ENCODE measurements at regions of chr7 and their contacts with region 1.

Region 1: DNA sequence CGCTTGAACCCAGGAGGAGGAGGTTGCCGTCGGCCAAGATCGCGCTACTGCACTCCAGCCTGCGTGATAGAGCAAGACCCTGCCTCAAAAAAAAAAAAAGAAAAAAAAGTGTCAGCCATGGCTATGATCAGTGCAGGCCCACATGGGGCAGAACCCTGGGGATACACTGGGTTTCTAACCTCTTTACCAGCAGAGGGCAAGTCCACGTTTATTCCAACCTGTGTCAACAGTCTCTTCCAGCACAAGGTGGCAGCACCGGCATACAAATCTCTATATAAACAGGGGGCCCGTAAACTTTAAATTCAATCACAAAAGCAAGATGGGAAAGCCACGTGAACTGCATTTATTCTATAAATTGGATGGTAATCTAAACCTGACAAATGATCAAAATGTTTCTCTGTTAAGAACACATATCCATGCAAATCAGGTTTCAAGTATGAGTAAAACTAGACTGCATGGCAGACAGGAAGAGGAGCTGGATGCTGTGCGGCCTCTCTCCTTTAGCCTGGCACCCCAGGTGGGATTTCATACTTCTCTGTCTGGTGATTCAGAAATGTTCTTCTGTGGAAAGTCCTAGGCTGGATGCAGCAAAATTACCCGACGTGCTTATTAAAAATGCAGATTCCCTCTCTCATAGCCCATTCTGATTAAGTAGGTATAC is 60.0 kb upstream of the STEAP1B start:
- H3K4me3 ChIP-seq: no peak overlapping the region
- H3K27ac ChIP-seq: no peak overlapping the region
- H3K4me1 ChIP-seq: peaks cover 19% of the 10 kb centered on the region
- CTCF ChIP-seq: peak; percentile 92

Region 2: DNA sequence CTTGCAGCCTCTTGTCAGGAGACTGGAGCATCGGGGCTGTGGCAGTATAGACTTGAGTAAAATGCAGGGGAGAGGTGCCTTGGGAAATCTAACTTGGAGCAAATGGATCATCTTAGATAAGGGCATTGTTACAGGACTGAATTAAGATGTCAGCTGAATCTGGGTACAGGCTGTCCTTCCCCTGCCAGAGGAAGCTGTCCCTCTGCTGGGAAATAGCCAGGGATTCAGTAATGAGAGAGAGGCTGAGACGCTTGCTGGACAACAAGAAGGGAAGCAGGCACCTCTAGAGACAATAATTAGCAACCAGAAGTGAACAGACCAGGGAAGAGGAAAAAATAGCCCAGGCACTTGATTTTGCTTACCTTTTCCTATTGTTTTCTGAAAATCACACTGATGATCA is 182.3 kb before region 1 on chr7:
- CTCF ChIA-PET with region 1: no interaction called
- POLR2A ChIA-PET with region 1: no interaction called
- H3K4me3 ChIP-seq: no peak overlapping the region
- H3K27ac ChIP-seq: no peak overlapping the region
- H3K4me1 ChIP-seq: peaks cover 9% of the 10 kb centered on the region; the same call in 1 of the 2 replicates
- CTCF ChIP-seq: no peak

Region 3: GRCh38 chr7:22726345-22727185 is 166.6 kb after region 1 on chr7:
- CTCF ChIA-PET with region 1: interaction called, 149 read pairs
- POLR2A ChIA-PET with region 1: interaction called, 5 read pairs
- H3K4me3 ChIP-seq: peak overlapping the region; percentile 8
- H3K27ac ChIP-seq: no peak overlapping the region
- H3K4me1 ChIP-seq: peaks cover 8% of the 10 kb centered on the region; the same call in 1 of the 2 replicates
- CTCF ChIP-seq: peak; percentile 49

Region 4: GRCh38 chr7:22732556-22733126 is 172.7 kb after region 1 on chr7:
- CTCF ChIA-PET with region 1: interaction called, 149 read pairs
- POLR2A ChIA-PET with region 1: no interaction called
- H3K4me3 ChIP-seq: no peak overlapping the region
- H3K27ac ChIP-seq: no peak overlapping the region
- H3K4me1 ChIP-seq: 0 out of 2 replicates have a peak, but pooled peaks cover 4% of the 10 kb centered on the region
- CTCF ChIP-seq: no peak

Region 5: DNA sequence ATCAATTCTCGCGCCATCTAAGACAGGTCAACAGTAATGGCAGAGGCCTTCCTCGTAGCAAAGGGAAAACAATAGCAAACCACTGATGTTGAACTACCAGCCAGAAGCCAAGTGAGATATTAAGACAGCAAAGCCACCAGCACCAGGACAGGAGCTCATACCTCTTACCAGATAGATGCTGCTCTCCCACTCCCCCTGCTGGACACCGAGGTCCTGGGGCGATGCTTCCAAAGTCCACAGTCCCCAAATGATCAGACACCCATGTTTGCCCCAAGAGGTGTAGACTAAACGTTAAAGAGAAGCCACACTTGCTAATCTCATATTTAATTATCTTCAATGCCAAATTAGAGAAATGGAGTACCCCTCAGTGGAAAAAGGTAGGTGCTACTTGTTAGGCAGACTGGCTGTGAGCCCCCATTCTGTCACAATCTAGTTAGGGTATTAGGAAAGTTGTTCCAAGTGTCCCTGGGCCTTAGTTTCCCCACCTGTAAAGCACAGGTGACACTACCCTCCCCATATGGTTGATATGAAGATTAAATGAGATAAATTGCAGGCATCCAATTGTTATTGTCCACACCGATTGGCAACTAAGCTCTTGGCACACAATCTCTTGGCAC is 222.8 kb after region 1 on chr7:
- CTCF ChIA-PET with region 1: interaction called, 20 read pairs
- POLR2A ChIA-PET with region 1: no interaction called
- H3K4me3 ChIP-seq: no peak overlapping the region
- H3K27ac ChIP-seq: no peak overlapping the region
- H3K4me1 ChIP-seq: 0 out of 2 replicates have a peak, but pooled peaks cover 3% of the 10 kb centered on the region
- CTCF ChIP-seq: no peak

Measured in HEK293 (cell line).